Activated B cell treated with CpG ODN at 0.5 μM for 24 hours (primary cell): ENCODE measurements at regions of chr13 and their contacts with region 1.

Region 1: DNA sequence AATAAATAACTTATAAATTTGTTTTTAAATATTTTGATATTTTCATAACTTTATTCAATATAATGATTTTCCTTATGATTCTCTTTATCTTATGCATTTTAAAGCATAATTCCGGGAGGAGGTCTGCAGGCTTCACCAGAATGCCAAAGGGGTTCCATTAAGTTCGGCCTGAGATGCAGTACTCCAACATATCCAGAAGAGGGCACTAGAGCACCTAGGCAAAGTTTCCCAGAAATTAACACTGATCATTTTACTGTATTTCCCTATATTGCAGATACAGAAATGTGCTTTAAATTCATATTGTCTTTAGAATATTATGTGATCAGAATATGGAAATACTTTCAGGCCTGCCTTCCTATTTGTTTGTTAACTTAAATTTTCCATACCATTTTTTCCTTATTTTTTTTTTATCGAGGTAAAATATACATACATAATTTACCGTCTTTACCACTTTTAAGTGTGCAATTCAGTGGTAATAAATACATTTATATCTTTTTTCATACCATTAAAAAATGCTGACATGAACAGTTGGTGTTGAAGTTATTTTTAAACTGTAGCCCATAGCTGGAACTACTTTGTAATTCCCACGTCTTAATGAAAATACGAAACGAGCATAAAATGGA is 58.9 kb upstream of the TM9SF2 start:
- DNase-seq: no peak
- ATAC-seq: peak; percentile 78
- H3K4me3 Mint-ChIP-seq: no peak overlapping the region
- H3K27ac Mint-ChIP-seq: no peak overlapping the region
- H3K4me1 Mint-ChIP-seq: peaks cover 16% of the 10 kb centered on the region
- H3K27me3 Mint-ChIP-seq: peaks cover 2% of the 10 kb centered on the region
- CTCF ChIP-seq: peak; percentile 99

Region 2: DNA sequence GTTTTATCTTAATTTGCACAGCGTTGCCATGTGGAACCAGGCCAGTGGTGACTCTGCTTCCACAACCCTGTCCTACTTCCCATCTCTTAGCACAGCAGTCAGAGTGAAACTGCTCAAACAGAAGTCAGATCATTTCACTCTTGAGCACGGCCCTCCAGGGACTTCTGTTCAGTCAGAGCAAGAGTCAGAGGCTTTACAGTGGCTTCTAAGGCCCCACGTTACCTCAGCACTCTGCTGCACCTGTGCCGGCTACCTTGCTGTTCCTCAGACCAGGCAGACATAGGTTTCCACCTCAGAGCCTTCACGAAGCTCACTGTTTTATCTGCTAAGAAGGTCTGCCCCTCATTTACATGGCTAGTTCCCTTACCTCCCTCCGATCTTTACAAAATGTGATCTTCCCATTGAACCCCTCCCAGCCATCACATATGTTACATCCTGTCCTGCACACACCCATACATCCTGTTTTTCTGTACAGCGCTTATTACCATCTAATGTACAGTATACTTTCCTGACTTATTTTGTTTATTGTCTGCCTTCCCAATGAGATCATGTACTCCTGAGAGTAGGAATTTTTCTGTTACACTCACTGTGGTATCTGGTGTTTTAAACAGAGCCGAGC is 100.5 kb after region 1 on chr13:
- CTCF ChIA-PET with region 1: no interaction called
- POLR2A ChIA-PET with region 1: no interaction called
- intact Hi-C with region 1: loop called (anchors 5 kb)
- DNase-seq: peak; percentile 61
- ATAC-seq: peak; percentile 94
- H3K4me3 Mint-ChIP-seq: peak overlapping the region; percentile 53
- H3K27ac Mint-ChIP-seq: peak overlapping the region; percentile 84
- H3K4me1 Mint-ChIP-seq: peaks cover 67% of the 10 kb centered on the region
- H3K27me3 Mint-ChIP-seq: no peaks in the 10 kb centered on the region
- CTCF ChIP-seq: no peak

Region 3: DNA sequence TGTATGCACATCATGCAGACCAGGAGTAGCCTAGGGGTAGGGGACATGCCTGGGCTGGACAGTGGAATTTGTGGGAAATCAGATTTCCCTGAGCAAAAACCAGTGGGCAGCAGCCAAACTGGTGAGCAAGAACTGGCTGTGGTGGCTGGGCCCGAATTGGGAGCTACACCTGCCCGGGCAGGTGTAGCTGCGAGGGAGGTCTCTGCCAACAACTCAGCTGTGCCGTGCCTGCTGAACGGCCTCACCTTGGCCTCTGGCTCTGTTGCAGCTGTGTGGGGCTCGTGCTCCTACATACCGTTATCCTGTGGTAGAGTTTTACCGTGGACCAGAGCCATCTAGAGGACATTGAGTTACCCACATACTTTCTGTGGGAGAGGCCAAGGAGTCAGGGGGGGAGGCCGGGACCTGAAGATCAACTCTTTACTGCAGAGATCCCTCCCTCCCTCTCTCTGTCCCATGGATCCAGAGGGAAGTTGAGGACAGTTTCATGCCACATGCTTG is 172.1 kb after region 1 on chr13:
- CTCF ChIA-PET with region 1: interaction called, 6 read pairs
- POLR2A ChIA-PET with region 1: no interaction called
- intact Hi-C with region 1: loop called (anchors 1 kb)
- DNase-seq: no peak
- ATAC-seq: peak; percentile 98
- H3K4me3 Mint-ChIP-seq: no peak overlapping the region
- H3K27ac Mint-ChIP-seq: no peak overlapping the region
- H3K4me1 Mint-ChIP-seq: peaks cover 26% of the 10 kb centered on the region
- H3K27me3 Mint-ChIP-seq: no peaks in the 10 kb centered on the region
- CTCF ChIP-seq: no peak

Region 4: GRCh38 chr13:99916366-99917103 is 474.2 kb after region 1 on chr13:
- CTCF ChIA-PET with region 1: interaction called, 5 read pairs
- POLR2A ChIA-PET with region 1: no interaction called
- intact Hi-C with region 1: loop called (anchors 1 kb)
- DNase-seq: no peak
- ATAC-seq: peak; percentile 56
- H3K4me3 Mint-ChIP-seq: no peak overlapping the region
- H3K27ac Mint-ChIP-seq: no peak overlapping the region
- H3K4me1 Mint-ChIP-seq: peaks cover 1% of the 10 kb centered on the region
- H3K27me3 Mint-ChIP-seq: peaks cover 25% of the 10 kb centered on the region
- CTCF ChIP-seq: peak; percentile 62

Region 5: DNA sequence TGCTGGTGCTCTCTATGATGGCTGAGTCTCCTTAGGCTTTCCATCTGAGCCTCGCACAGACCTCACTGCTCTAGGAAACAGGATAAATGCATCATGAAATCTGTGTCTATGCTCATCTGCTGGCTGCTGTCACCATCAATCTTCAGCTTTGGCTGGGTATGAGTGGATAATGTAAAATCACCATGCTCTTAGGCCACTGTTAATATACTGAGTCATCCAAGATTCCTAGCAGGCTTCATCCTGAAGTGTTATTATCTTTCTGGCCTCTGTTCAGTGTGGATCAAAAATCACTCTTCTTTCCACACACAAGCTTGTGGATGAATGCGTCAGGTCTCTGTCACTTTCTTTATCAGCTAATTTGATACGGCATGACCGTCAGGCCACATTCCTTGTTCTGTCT is 1656.5 kb after region 1 on chr13:
- CTCF ChIA-PET with region 1: no interaction called
- POLR2A ChIA-PET with region 1: no interaction called
- intact Hi-C with region 1: loop called (anchors 5 kb)
- DNase-seq: no peak
- ATAC-seq: no peak
- H3K4me3 Mint-ChIP-seq: no peak overlapping the region
- H3K27ac Mint-ChIP-seq: no peak overlapping the region
- H3K4me1 Mint-ChIP-seq: no peaks in the 10 kb centered on the region
- H3K27me3 Mint-ChIP-seq: no peaks in the 10 kb centered on the region
- CTCF ChIP-seq: no peak